ENCODE measurements at regions of chr12 and their contacts with region 1.

Region 1: GRCh38 chr12:60290532-60290931 is 694.7 kb downstream of the SLC16A7 start:
- DNase-seq: no peak
- ATAC-seq: no peak
- H3K4me3 ChIP-seq: no peak overlapping the region
- H3K27ac ChIP-seq: no peak overlapping the region
- H3K4me1 ChIP-seq: no peaks in the 10 kb centered on the region
- H3K27me3 ChIP-seq: no peaks in the 10 kb centered on the region
- CTCF ChIP-seq: no peak
- POLR2A ChIP-seq: no peak
- RAD21 ChIP-seq: no peak

Region 2: DNA sequence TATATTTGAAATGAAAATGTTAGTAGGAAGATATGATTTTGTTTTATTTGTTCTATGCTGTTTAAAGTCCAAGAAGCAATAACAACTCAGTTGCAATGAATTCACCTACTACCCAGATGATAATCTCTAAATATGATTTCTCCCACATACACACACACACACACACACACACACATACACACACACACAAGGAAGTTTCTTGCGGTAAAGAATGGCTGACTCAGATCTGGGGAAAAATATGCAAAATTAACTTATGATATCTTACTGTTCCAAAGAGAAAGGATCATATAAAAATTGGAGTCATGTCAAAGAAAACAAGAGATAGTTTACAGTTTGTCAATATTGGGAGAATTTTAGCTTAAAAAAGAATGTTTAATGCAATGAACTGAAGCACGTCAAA is 238.0 kb before region 1 on chr12:
- CTCF ChIA-PET with region 1: no interaction called
- POLR2A ChIA-PET with region 1: no interaction called
- RAD21 ChIA-PET with region 1: no interaction called
- intact Hi-C with region 1: no loop called
- DNase-seq: no peak
- ATAC-seq: no peak
- H3K4me3 ChIP-seq: no peak overlapping the region
- H3K27ac ChIP-seq: no peak overlapping the region
- H3K4me1 ChIP-seq: no peaks in the 10 kb centered on the region
- H3K27me3 ChIP-seq: no peaks in the 10 kb centered on the region
- CTCF ChIP-seq: no peak
- POLR2A ChIP-seq: no peak
- RAD21 ChIP-seq: no peak

Region 3: DNA sequence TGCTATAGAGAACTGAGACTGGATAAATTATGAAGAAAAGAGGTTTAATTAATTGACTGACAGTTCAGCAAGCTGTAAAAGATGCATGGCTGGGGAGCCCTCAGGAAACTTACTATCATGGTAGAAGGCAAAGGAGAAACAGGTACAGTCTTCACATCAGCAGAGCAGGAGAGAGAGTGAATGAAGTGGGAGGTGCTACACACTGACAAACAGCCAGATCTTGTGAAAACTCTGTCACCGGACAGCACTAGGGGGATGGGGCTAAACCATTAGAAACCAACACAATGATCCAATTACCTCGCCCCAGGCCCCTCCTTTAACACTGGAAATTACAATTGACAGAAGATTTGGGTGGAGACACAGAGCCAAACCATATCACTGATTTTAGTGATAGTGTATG is 12.3 kb before region 1 on chr12:
- CTCF ChIA-PET with region 1: no interaction called
- POLR2A ChIA-PET with region 1: no interaction called
- RAD21 ChIA-PET with region 1: no interaction called
- intact Hi-C with region 1: loop called (anchors 1 kb)
- DNase-seq: no peak
- ATAC-seq: no peak
- H3K4me3 ChIP-seq: no peak overlapping the region
- H3K27ac ChIP-seq: no peak overlapping the region
- H3K4me1 ChIP-seq: no peaks in the 10 kb centered on the region
- H3K27me3 ChIP-seq: no peaks in the 10 kb centered on the region
- CTCF ChIP-seq: no peak
- POLR2A ChIP-seq: no peak
- RAD21 ChIP-seq: no peak

Region 4: GRCh38 chr12:60489071-60489470 is 198.5 kb after region 1 on chr12:
- CTCF ChIA-PET with region 1: no interaction called
- POLR2A ChIA-PET with region 1: no interaction called
- RAD21 ChIA-PET with region 1: no interaction called
- intact Hi-C with region 1: no loop called
- DNase-seq: no peak
- ATAC-seq: no peak
- H3K4me3 ChIP-seq: no peak overlapping the region
- H3K27ac ChIP-seq: no peak overlapping the region
- H3K4me1 ChIP-seq: no peaks in the 10 kb centered on the region
- H3K27me3 ChIP-seq: no peaks in the 10 kb centered on the region
- CTCF ChIP-seq: no peak
- POLR2A ChIP-seq: no peak
- RAD21 ChIP-seq: no peak